ENCODE measurements at regions of chr19 and their contacts with region 1.

Region 1: DNA sequence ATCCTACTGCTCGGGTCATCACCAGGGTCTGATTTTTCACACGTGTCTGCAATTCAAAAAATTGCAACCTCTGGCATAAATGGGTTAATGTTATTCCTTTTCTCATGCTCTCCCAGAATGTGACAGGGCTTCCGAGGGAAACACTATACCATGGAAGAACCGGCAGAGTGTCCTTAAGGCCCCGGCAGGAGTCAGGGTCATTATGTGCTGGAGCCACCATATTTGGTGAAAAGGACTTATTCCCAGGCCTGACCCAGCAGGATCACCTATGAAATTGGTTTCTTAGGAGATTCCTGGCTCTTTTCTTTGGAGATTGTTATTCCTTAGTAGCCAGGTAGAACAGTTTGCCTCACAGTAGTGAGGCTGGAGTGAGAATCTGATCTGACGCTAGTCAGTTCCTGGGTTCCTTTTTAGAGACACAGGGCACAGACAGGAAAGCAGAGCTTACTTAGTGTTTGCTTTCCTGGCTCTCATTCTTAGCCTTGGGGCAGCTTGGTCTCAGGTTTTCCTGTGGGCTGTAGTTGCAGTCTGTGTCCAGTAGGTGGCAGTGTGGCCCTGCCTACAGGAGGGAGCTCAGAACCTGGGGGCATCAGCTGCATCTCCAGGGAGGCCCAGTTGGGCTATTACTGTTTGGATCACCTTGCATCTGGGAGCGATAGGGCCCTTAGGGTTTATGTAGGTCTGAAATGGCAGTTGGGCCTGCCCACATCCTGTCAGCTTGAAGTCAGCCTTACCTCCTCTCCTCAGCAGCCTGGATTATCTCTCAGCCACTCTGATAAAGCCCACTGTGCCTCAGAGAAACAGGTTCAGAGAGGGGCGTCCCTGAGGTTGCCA is 12.4 kb downstream of the SNRNP70 start:
- DNase-seq: peak; percentile 82 to 90
- H3K4me3 ChIP-seq: no peak overlapping the region
- H3K27ac ChIP-seq: peak overlapping the region in 3 of 5 donors; percentile 7 to 45 (median 29)
- H3K4me1 ChIP-seq: peaks cover 0 to 31% (median 25%) of the 10 kb centered on the region in 4 donors
- H3K27me3 ChIP-seq: no peaks in the 10 kb centered on the region
- CTCF ChIP-seq: peak in 6 of 7 experiments; percentile 64 to 99 (median 98)
- EP300 ChIP-seq: no peak
- POLR2A ChIP-seq: no peak

Region 2: GRCh38 chr19:48993175-48994034 is 104.3 kb before region 1 on chr19 and contains the starts of genes GYS1 and RUVBL2:
- intact Hi-C with region 1: no loop called
- DNase-seq: peak; percentile 100
- H3K4me3 ChIP-seq: peak within 1 kb of the TSS; percentile 57 to 81 (median 71)
- H3K27ac ChIP-seq: peak within 1 kb of the TSS; percentile 85 to 96 (median 94)
- H3K4me1 ChIP-seq: peaks cover 32 to 47% (median 42%) of the 10 kb centered on the region in 4 donors
- H3K27me3 ChIP-seq: no peaks in the 10 kb centered on the region
- CTCF ChIP-seq: peak in 6 of 7 experiments; percentile 92 to 99 (median 98)
- EP300 ChIP-seq: no peak
- POLR2A ChIP-seq: peak in 2 of 4 donors; percentile 54 to 79
- total RNA-seq, gene GYS1: 13.0 to 63.6 (median 46.4) TPM
- total RNA-seq, gene RUVBL2: 0.58 to 96.0 (median 59.1) TPM

Region 3: DNA sequence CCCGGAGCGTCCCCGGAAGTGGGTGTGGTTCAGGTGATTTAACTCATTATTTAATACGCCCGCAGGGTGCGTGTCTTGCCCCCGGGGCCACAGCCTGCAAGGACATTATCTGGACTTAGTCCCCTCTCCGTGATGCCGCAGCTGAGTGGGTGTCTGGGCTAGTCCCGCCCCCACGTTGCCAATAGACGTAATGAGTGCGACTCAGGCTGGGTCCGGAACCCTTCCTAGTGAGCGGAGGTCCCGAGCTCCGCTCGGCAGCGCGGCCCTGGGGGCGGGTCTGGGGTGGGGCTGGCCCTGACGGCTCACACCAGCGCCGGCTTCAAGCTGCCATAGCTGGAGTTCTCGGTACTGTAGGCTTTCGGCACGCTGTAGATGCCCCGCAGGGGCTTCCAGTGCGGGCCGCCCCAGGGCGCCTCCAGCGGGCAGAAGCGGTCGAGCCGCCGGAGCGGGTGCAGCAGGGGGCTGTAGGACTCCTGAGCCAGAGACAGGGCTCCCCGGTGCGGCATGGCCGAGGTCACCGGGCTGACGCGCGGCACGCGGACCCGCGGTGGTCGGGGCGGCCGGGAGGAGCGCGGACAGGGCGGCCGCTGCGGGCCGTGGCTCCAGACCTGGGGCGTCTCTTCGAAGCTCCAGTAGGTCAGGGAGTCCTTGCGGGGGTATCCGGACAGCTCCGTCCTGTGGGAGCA is 79.9 kb before region 1 on chr19:
- intact Hi-C with region 1: no loop called
- DNase-seq: peak; percentile 53 to 82
- H3K4me3 ChIP-seq: peak overlapping the region; percentile 49 to 62 (median 50)
- H3K27ac ChIP-seq: peak overlapping the region in 1 of 5 donors; percentile 32
- H3K4me1 ChIP-seq: peaks cover 22 to 27% (median 25%) of the 10 kb centered on the region in 4 donors
- H3K27me3 ChIP-seq: peaks cover 0 to 46% (median 15%) of the 10 kb centered on the region in 3 donors
- CTCF ChIP-seq: peak in 2 of 7 experiments; percentile 34 to 41
- EP300 ChIP-seq: no peak
- POLR2A ChIP-seq: no peak

Region 4: GRCh38 chr19:49150106-49150943 is 52.7 kb after region 1 on chr19:
- intact Hi-C with region 1: loop called (anchors 10 kb)
- DNase-seq: peak; percentile 85 to 96
- H3K4me3 ChIP-seq: peak overlapping the region; percentile 66 to 82 (median 70)
- H3K27ac ChIP-seq: peak overlapping the region; percentile 72 to 92 (median 85)
- H3K4me1 ChIP-seq: peaks cover 35 to 59% (median 51%) of the 10 kb centered on the region in 4 donors
- H3K27me3 ChIP-seq: peaks cover 0 to 33% (median 0%) of the 10 kb centered on the region in 3 donors
- CTCF ChIP-seq: no peak
- EP300 ChIP-seq: no peak
- POLR2A ChIP-seq: no peak

Region 5: DNA sequence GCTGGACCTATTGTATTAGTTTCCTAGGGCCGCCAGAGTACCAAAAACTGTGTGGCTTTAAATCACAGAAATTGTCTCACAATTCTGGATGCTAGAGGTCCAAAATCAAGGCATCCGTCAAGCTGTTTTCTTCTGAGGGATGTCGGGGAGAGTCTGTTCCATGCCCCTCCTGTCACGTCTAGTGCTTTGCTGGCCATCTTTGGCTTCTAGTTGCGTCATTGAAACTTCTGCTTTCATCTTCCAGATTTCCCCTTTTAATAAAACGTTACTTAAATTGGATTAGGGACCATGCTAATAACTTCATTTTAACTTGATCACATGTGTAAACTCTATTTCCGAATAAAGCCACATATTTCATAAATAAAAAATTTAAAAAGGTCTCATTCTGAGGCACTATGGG is 107.4 kb after region 1 on chr19:
- intact Hi-C with region 1: loop called (anchors 5 kb)
- DNase-seq: no peak
- H3K4me3 ChIP-seq: no peak overlapping the region
- H3K27ac ChIP-seq: no peak overlapping the region
- H3K4me1 ChIP-seq: peaks cover 6 to 13% (median 10%) of the 10 kb centered on the region in 4 donors
- H3K27me3 ChIP-seq: no peaks in the 10 kb centered on the region
- CTCF ChIP-seq: no peak
- EP300 ChIP-seq: no peak
- POLR2A ChIP-seq: no peak

Measured in stomach (tissue), 19 donors.